Right ventricle myocardium inferior (tissue), 1 donor: ENCODE measurements at regions of chr11 and their contacts with region 1.

Region 1: DNA sequence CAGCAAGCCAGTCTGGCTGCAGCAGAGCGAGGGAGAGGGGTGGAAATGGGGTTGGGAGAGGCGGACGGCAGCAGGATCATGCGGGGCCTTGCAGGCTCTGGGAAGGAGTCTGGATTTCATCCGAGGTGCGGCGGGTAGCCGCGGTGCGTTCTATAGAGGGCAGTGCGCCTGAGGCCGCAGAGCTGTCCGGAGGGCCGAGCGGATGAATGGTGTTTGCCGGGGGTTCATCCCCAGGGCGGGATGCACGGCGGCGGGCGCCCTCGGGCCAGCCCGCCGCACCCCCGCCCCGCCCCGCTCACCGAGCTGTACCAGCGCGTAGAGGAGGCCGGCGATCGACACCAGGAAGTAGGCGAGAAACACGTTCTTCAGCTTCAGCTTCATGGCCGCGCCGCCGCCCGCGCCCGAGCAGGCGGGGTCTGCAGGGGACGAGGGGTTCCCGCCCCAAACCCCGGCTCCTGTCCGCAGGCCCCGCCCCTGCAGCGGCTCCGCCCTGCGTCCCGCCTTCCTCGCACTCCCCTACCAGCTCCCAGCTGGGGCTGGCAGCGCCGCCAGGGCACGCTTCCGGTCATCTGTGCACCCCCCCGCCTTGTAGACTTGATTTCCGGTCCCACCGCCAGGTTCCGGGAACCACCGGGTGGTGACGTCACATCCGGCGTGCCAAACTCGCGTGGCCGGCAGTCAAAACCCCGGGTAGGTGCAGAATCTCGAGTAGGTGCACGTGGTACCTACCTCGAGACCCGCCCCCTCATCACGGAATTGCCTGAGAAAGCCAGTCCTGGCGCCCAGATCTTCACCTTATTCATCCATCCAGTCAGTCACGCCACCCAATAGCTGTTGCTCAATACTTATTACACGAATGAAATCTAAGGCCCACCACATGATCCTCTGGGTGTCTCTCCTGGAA is at the start of gene B3GAT3:
- DNase-seq: peak; percentile 99
- ATAC-seq: peak; percentile 99
- total RNA-seq, gene B3GAT3: 12.8 TPM

Region 2: GRCh38 chr11:62645956-62646824 is 24.4 kb after region 1 on chr11 and contains the start of gene GANAB:
- intact Hi-C with region 1: loop called (anchors 2 kb)
- DNase-seq: peak; percentile 100
- ATAC-seq: peak; percentile 98
- total RNA-seq, gene GANAB: 105 TPM

Region 3: GRCh38 chr11:62705880-62706849 is 84.3 kb after region 1 on chr11:
- intact Hi-C with region 1: no loop called
- DNase-seq: peak; percentile 98
- ATAC-seq: peak; percentile 88